Activated CD4-positive, alpha-beta T cell treated with anti-CD3 and anti-CD28 coated beads for 36 hours (primary cell): ENCODE measurements at regions of chr10 and their contacts with region 1.

Region 1: GRCh38 chr10:43138021-43138756 is at the start of gene CSGALNACT2:
- DNase-seq: peak; percentile 94
- ATAC-seq: peak; percentile 69
- H3K4me3 Mint-ChIP-seq: peak within 1 kb of the TSS; percentile 95
- H3K27ac Mint-ChIP-seq: peak within 1 kb of the TSS; percentile 98
- H3K4me1 Mint-ChIP-seq: peaks cover 48% of the 10 kb centered on the region
- H3K27me3 Mint-ChIP-seq: no peaks in the 10 kb centered on the region
- total RNA-seq, gene CSGALNACT2: 19.3 to 19.5 TPM

Region 2: GRCh38 chr10:42638055-42638820 is 500.0 kb before region 1 on chr10 and contains the start of gene ZNF33B:
- CTCF ChIA-PET with region 1: no interaction called
- POLR2A ChIA-PET with region 1: no interaction called
- intact Hi-C with region 1: loop called (anchors 2 to 10 kb)
- DNase-seq: peak; percentile 97
- ATAC-seq: peak; percentile 95
- H3K4me3 Mint-ChIP-seq: peak within 1 kb of the TSS; percentile 88
- H3K27ac Mint-ChIP-seq: peak within 1 kb of the TSS; percentile 97
- H3K4me1 Mint-ChIP-seq: peaks cover 25% of the 10 kb centered on the region
- H3K27me3 Mint-ChIP-seq: no peaks in the 10 kb centered on the region
- total RNA-seq, gene ZNF33B: 7.4 to 10.5 TPM

Region 3: GRCh38 chr10:43120929-43121314 is 17.3 kb before region 1 on chr10:
- CTCF ChIA-PET with region 1: interaction called, 3 read pairs
- POLR2A ChIA-PET with region 1: interaction called, 16 read pairs
- intact Hi-C with region 1: loop called (anchors 1 to 2 kb)
- DNase-seq: peak; percentile 84
- ATAC-seq: peak; percentile 99
- H3K4me3 Mint-ChIP-seq: peak overlapping the region; percentile 16
- H3K27ac Mint-ChIP-seq: peak overlapping the region; percentile 82
- H3K4me1 Mint-ChIP-seq: peaks cover 19% of the 10 kb centered on the region
- H3K27me3 Mint-ChIP-seq: no peaks in the 10 kb centered on the region

Region 4: DNA sequence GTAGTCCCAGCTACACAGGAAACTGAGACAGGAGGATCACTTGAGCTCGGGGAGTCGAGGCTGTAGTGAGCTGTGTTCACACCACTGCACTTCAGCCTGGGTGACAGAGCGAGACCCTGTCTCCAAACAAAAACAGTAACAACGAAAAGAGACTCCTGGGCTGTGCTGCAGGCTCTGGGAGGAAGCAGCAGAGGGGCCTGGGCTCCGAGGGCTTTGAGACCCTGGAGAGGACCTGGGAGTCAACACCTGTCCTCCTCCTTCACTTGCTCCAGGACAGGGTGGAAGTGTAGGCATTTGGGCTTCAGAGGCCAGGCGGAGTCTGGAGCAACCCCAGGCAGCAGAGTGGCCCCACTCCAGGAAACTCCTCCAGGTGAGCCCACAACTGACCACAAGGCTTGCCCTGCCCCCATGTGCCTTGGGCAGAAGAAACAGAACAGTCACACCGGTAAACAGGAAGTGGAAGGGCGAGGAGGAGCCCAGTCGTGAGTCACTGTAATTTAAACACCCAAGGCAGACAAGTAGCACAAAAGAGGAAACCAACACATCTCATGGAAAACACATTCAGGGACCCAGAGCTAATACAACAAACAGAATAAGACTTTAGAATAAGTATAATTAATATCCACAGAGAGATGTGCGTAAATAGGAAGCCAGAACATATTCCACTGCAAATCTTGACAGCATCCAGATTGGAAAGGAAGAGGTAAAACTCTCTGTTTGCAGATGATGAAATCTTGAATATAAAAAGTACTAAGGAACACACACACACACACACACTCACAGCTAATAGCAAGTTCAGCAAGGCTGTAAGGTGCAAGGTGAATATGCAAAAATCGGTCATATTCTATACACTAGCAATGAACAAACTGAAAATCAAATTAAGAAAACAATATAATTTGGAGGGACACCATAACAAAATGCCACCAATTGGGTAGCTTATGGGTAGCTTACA is 149.1 kb after region 1 on chr10:
- CTCF ChIA-PET with region 1: no interaction called
- POLR2A ChIA-PET with region 1: no interaction called
- intact Hi-C with region 1: loop called in 1 of 2 experiments (anchors 10 kb)
- DNase-seq: peak; percentile 74
- ATAC-seq: peak; percentile 95
- H3K4me3 Mint-ChIP-seq: peak overlapping the region; percentile 2
- H3K27ac Mint-ChIP-seq: peak overlapping the region; percentile 84
- H3K4me1 Mint-ChIP-seq: peaks cover 24% of the 10 kb centered on the region
- H3K27me3 Mint-ChIP-seq: peaks cover 2% of the 10 kb centered on the region

Region 5: DNA sequence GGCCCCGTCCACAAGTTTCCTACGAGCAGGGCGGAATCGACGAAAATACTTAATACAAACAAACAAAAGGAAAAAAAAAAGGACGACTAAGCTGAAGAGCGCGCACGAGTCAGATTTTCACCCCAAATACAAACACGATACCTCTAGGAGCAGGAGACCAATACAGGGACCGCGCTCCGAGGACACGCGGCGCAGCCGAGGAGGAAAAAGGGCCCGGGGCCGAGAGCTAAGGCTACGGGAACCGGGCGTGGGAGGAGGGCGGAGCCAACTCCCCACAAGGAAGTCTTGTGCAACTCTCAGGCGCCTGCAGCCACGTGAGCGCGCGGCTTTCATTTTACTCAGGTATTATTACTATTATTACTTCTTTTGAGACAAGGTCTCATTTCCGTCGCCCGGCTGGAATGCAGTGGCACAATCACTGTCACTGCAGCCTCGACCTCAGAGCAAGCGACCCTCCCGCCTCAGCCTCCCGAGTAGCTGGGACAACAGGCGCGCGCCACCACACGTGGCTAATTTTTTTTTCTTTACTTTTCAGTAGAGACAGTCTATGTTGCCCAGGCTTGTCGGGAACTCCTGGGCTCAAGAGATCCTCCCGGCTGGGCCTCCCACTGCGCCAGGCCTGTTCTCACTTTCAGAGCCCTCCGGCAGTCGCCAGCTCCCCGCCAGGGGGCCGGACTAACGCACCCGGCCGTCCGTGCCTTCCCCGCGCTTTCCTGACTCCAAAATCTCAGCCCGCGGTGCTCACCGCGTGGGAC is 269.6 kb after region 1 on chr10:
- CTCF ChIA-PET with region 1: no interaction called
- POLR2A ChIA-PET with region 1: interaction called, 12 read pairs
- intact Hi-C with region 1: loop called in 1 of 2 experiments (anchors 2 kb)
- DNase-seq: peak; percentile 95
- ATAC-seq: peak; percentile 31
- H3K4me3 Mint-ChIP-seq: peak overlapping the region; percentile 99
- H3K27ac Mint-ChIP-seq: peak overlapping the region; percentile 100
- H3K4me1 Mint-ChIP-seq: peaks cover 30% of the 10 kb centered on the region
- H3K27me3 Mint-ChIP-seq: no peaks in the 10 kb centered on the region

Region 6: GRCh38 chr10:43594944-43595589 is 456.9 kb after region 1 on chr10:
- CTCF ChIA-PET with region 1: no interaction called
- POLR2A ChIA-PET with region 1: no interaction called
- intact Hi-C with region 1: loop called in 1 of 2 experiments (anchors 5 kb)
- DNase-seq: peak; percentile 69
- ATAC-seq: peak; percentile 80
- H3K4me3 Mint-ChIP-seq: peak overlapping the region; percentile 42
- H3K27ac Mint-ChIP-seq: peak overlapping the region; percentile 76
- H3K4me1 Mint-ChIP-seq: peaks cover 26% of the 10 kb centered on the region
- H3K27me3 Mint-ChIP-seq: peaks cover 5% of the 10 kb centered on the region